Activated naive CD4-positive, alpha-beta T cell treated with anti-CD3 and anti-CD28 coated beads for 36 hours (primary cell): ENCODE measurements at regions of chr6 and their contacts with region 1.

Region 1: DNA sequence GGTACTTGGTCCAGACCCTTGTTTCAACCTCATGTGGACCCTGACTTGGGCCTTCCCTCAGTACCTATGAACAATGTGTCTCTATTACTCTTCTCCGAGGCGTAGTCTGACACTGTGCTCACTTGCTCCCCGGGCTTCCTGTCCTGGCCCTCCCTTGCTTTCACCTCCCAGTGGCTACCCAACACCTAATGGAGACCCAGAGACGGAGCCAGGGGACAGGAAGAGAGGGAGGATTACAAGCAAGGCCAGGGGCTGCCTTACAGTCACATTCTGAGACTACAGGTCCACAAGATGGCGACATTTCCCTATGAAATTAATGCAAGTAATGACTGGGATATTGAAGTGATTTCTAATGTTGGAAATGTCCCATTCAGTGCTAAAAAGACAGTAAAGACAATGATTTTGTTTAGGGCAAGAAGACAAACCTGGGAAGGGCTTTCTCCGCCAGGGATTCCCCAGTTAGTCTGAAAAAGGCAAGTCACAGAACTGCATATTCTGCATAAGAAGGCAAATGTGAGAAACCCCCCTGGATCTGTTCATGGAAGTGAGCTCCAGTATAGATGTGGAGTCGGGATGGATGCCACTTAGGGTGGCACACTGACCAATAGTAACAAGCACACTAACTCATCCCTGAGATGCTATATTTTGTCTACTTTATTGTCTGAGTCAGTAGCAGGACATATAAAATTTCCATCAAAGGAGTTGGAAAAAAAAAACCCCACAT is 44.0 kb upstream of the ZBTB24 start:
- DNase-seq: peak; percentile 70
- H3K4me3 Mint-ChIP-seq: no peak overlapping the region
- H3K27ac Mint-ChIP-seq: no peak overlapping the region
- H3K4me1 Mint-ChIP-seq: peaks cover 2% of the 10 kb centered on the region
- H3K27me3 Mint-ChIP-seq: no peaks in the 10 kb centered on the region

Region 2: GRCh38 chr6:109349419-109350078 is 177.5 kb before region 1 on chr6:
- CTCF ChIA-PET with region 1: no interaction called
- intact Hi-C with region 1: no loop called
- DNase-seq: no peak
- H3K4me3 Mint-ChIP-seq: no peak overlapping the region
- H3K27ac Mint-ChIP-seq: no peak overlapping the region
- H3K4me1 Mint-ChIP-seq: no peaks in the 10 kb centered on the region
- H3K27me3 Mint-ChIP-seq: no peaks in the 10 kb centered on the region

Region 3: DNA sequence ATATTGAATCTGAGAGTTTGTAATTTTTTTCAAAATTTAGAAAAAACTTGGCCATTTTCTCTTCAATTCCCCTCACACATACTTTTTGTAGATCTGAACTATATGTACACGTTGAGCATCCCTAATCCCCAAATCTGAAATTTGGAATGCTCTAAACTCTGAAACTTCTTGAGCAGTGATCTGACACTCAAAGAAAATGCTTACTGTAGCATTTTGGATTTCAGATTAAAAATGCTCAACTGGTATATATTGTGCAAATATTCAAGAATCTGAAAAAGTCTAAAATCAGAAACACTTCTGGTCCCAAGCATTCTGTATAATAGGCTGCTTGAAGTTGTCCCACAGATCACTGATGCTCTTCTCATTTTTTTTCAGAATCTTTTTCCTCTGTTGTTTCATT is 34.8 kb after region 1 on chr6:
- CTCF ChIA-PET with region 1: no interaction called
- intact Hi-C with region 1: no loop called
- DNase-seq: no peak
- H3K4me3 Mint-ChIP-seq: no peak overlapping the region
- H3K27ac Mint-ChIP-seq: no peak overlapping the region
- H3K4me1 Mint-ChIP-seq: no peaks in the 10 kb centered on the region
- H3K27me3 Mint-ChIP-seq: no peaks in the 10 kb centered on the region

Region 4: GRCh38 chr6:109783250-109783986 is 256.4 kb after region 1 on chr6:
- CTCF ChIA-PET with region 1: no interaction called
- intact Hi-C with region 1: loop called (anchors 10 kb)
- DNase-seq: peak; percentile 14
- H3K4me3 Mint-ChIP-seq: no peak overlapping the region
- H3K27ac Mint-ChIP-seq: no peak overlapping the region
- H3K4me1 Mint-ChIP-seq: no peaks in the 10 kb centered on the region
- H3K27me3 Mint-ChIP-seq: no peaks in the 10 kb centered on the region

Region 5: GRCh38 chr6:110389689-110390382 is 862.8 kb after region 1 on chr6:
- CTCF ChIA-PET with region 1: interaction called, 4 read pairs
- intact Hi-C with region 1: loop called (anchors 1 kb)
- DNase-seq: no peak
- H3K4me3 Mint-ChIP-seq: no peak overlapping the region
- H3K27ac Mint-ChIP-seq: no peak overlapping the region
- H3K4me1 Mint-ChIP-seq: peaks cover 6% of the 10 kb centered on the region
- H3K27me3 Mint-ChIP-seq: no peaks in the 10 kb centered on the region